HepG2 (cell line): ENCODE measurements at regions of chr1 and their contacts with region 1.

Region 1: DNA sequence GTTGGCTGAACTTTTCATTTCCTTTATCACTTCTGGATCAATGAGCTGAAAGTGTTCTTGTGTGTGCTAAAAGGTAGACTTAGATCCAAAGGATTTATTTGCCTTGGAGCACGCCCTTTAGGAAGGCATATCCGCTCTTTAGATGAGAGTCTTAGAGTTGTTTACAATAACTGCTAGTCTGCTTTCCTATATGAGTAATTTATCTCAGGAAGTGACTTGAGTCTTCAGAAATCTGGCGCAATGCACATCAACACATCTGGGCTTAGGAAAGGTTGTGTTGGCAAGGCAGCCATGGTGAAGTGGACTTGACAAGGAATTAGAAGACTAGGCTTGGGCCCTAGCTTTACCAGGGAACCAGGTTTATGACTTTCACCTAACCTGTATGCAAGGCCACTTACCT is 204.1 kb upstream of the PTGFR start:
- DNase-seq: no peak
- ATAC-seq: no peak
- H3K4me3 ChIP-seq: no peak overlapping the region
- H3K27ac ChIP-seq: no peak overlapping the region
- H3K4me1 ChIP-seq: no peaks in the 10 kb centered on the region
- H3K27me3 ChIP-seq: no peaks in the 10 kb centered on the region
- CTCF ChIP-seq: no peak
- EP300 ChIP-seq: no peak
- POLR2A ChIP-seq: no peak
- RAD21 ChIP-seq: no peak

Region 2: GRCh38 chr1:77768006-77768405 is 518.7 kb before region 1 on chr1:
- CTCF ChIA-PET with region 1: no interaction called
- POLR2A ChIA-PET with region 1: no interaction called
- in situ Hi-C with region 1: no loop called
- intact Hi-C with region 1: loop called (anchors 5 kb)
- DNase-seq: no peak
- ATAC-seq: no peak
- H3K4me3 ChIP-seq: no peak overlapping the region
- H3K27ac ChIP-seq: no peak overlapping the region
- H3K4me1 ChIP-seq: no peaks in the 10 kb centered on the region
- H3K27me3 ChIP-seq: 0 out of 5 replicates have a peak, but pooled peaks cover 0 to 4% of the 10 kb centered on the region in 2 experiments
- CTCF ChIP-seq: no peak
- EP300 ChIP-seq: no peak
- POLR2A ChIP-seq: no peak
- RAD21 ChIP-seq: no peak

Region 3: DNA sequence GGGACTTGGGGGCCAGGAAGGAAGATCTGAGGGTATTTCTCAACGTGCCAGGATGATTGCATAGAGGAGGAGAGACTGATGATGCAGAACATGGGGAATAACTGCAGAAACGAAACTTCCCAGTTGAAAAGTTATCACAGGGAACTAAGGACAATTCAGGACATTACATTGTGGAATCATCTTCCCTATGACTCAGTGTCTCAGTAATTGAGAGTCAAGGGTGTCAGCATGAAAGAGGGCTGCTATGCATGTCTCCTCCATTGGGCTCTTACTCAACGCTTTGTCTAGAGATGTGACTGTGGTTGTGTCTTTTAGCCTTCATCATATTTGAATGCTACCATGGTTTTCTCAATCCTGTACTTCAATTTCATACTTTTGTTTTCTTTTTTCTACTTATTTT is 155.2 kb after region 1 on chr1:
- CTCF ChIA-PET with region 1: no interaction called
- POLR2A ChIA-PET with region 1: no interaction called
- in situ Hi-C with region 1: no loop called
- intact Hi-C with region 1: no loop called
- DNase-seq: no peak
- ATAC-seq: no peak
- H3K4me3 ChIP-seq: no peak overlapping the region
- H3K27ac ChIP-seq: no peak overlapping the region
- H3K4me1 ChIP-seq: no peaks in the 10 kb centered on the region
- H3K27me3 ChIP-seq: no peaks in the 10 kb centered on the region
- CTCF ChIP-seq: no peak
- EP300 ChIP-seq: no peak
- POLR2A ChIP-seq: no peak
- RAD21 ChIP-seq: no peak